PC-3 (cell line): ENCODE measurements at regions of chrX and their contacts with region 1.

Region 1: DNA sequence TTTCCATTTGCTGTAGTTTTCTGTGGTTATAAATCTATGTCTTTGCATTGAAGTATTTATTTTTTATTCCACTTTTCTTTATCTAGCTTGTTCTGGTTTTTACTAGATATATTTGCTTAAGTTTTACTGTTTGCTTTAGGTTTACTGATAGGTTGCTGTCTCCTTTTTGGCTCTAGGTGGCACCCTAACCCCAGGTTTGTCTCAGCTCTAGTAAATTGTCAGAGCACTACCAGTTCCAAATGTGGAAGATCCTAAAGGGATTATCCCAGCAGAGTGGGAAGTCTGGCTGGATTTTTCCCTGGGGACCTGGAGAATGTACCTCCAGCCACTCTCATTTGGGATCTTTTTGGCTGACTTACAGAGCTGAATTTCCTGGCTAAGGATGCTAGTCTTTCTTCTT is 106.1 kb downstream of the PBDC1 start:
- DNase-seq: peak; percentile 67
- ATAC-seq: peak; percentile 79
- H3K4me3 ChIP-seq: no peak overlapping the region
- H3K27ac ChIP-seq: no peak overlapping the region
- H3K4me1 ChIP-seq: no peaks in the 10 kb centered on the region
- H3K27me3 ChIP-seq: no peaks in the 10 kb centered on the region
- CTCF ChIP-seq: peak; percentile 78

Region 2: GRCh38 chrX:75067931-75068330 is 1211.1 kb before region 1 on chrX:
- CTCF ChIA-PET with region 1: no interaction called
- POLR2A ChIA-PET with region 1: no interaction called
- intact Hi-C with region 1: no loop called
- DNase-seq: peak; percentile 14
- ATAC-seq: no peak
- H3K4me3 ChIP-seq: no peak overlapping the region
- H3K27ac ChIP-seq: no peak overlapping the region
- H3K4me1 ChIP-seq: no peaks in the 10 kb centered on the region
- H3K27me3 ChIP-seq: no peaks in the 10 kb centered on the region
- CTCF ChIP-seq: no peak

Region 3: GRCh38 chrX:76427560-76428242 is 148.7 kb after region 1 on chrX and contains the start of gene MAGEE1:
- CTCF ChIA-PET with region 1: no interaction called
- POLR2A ChIA-PET with region 1: no interaction called
- intact Hi-C with region 1: loop called (anchors 10 kb)
- DNase-seq: peak; percentile 75
- ATAC-seq: peak; percentile 90
- H3K4me3 ChIP-seq: peak within 1 kb of the TSS; percentile 86
- H3K27ac ChIP-seq: no peak within 1 kb of the TSS
- H3K4me1 ChIP-seq: no peaks in the 10 kb centered on the region
- H3K27me3 ChIP-seq: no peaks in the 10 kb centered on the region
- CTCF ChIP-seq: no peak
- total RNA-seq, gene MAGEE1: 1.7 and 2.8 TPM in 2 replicates

Region 4: DNA sequence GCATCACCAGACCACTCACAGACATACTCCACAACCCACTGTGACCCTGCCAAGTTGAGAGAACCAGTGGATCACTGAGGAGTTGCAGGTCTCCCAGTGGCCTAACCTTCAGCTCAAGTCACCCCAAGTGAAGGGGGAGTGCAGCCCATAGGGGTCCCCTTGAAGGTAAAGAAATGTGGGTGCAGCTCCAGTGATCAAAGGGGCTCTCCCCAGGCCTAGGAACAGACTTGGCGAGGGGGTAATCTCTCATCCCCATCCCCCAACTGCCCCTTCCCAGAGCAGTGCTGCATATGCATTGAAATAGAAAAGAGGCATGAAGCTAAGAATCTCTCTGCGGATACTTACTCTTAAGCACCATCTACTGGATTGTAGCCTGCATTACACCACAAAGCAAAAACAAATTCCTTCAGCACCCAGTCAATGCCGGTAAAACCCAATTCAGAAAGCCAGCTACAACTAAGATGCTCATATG is 175.5 kb after region 1 on chrX:
- CTCF ChIA-PET with region 1: interaction called, 8 read pairs
- POLR2A ChIA-PET with region 1: no interaction called
- intact Hi-C with region 1: loop called (anchors 1 kb)
- DNase-seq: peak; percentile 50
- ATAC-seq: peak; percentile 54
- H3K4me3 ChIP-seq: no peak overlapping the region
- H3K27ac ChIP-seq: no peak overlapping the region
- H3K4me1 ChIP-seq: no peaks in the 10 kb centered on the region
- H3K27me3 ChIP-seq: no peaks in the 10 kb centered on the region
- CTCF ChIP-seq: peak; percentile 61

Region 5: GRCh38 chrX:78029663-78030062 is 1750.7 kb after region 1 on chrX:
- CTCF ChIA-PET with region 1: no interaction called
- POLR2A ChIA-PET with region 1: no interaction called
- intact Hi-C with region 1: loop called (anchors 5 kb)
- DNase-seq: peak; percentile 66
- ATAC-seq: peak; percentile 77
- H3K4me3 ChIP-seq: no peak overlapping the region
- H3K27ac ChIP-seq: no peak overlapping the region
- H3K4me1 ChIP-seq: no peaks in the 10 kb centered on the region; the same call in 1 of the 2 replicates
- H3K27me3 ChIP-seq: no peaks in the 10 kb centered on the region
- CTCF ChIP-seq: peak; percentile 88